Activated CD4-positive, alpha-beta T cell treated with anti-CD3 and anti-CD28 coated beads, Interleukin-2, amount 10 ng/mL, durations not matched to agents 24 days and 14 days (primary cell): ENCODE measurements at regions of chr4 and their contacts with region 1.

Region 1: GRCh38 chr4:1200425-1201035 is 28.1 kb upstream of the SPON2 start:
- DNase-seq: no peak
- H3K4me3 Mint-ChIP-seq: peak overlapping the region; percentile 75
- H3K27ac Mint-ChIP-seq: peak overlapping the region; percentile 99
- H3K4me1 Mint-ChIP-seq: peaks cover 38% of the 10 kb centered on the region
- H3K27me3 Mint-ChIP-seq: no peaks in the 10 kb centered on the region

Region 2: GRCh38 chr4:650951-651883 is 549.3 kb before region 1 on chr4:
- intact Hi-C with region 1: no loop called
- DNase-seq: no peak
- H3K4me3 Mint-ChIP-seq: no peak overlapping the region
- H3K27ac Mint-ChIP-seq: no peak overlapping the region
- H3K4me1 Mint-ChIP-seq: peaks cover 3% of the 10 kb centered on the region
- H3K27me3 Mint-ChIP-seq: no peaks in the 10 kb centered on the region

Region 3: DNA sequence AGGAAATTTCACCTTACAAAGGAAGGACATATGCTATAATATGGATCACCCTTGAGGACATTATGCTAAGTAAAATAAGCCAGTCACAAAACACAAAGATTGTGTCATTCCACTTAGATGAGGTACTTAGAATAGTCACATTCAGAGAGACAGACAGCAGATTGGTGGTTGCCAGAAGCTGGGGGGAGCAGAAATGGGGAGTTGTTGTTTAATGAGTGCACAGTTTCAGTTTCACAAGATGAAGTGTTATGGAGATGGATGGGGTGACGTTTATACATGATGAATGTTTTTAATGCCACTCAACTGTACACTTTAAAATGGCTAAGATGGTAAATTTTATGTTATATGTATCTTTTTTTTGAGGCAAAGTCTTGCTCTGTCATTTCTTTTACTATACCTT is 13.3 kb before region 1 on chr4:
- intact Hi-C with region 1: loop called (anchors 1 kb)
- DNase-seq: peak; percentile 86
- H3K4me3 Mint-ChIP-seq: no peak overlapping the region
- H3K27ac Mint-ChIP-seq: no peak overlapping the region
- H3K4me1 Mint-ChIP-seq: peaks cover 12% of the 10 kb centered on the region
- H3K27me3 Mint-ChIP-seq: no peaks in the 10 kb centered on the region

Region 4: GRCh38 chr4:1218634-1219565 is 18.4 kb after region 1 on chr4:
- intact Hi-C with region 1: loop called (anchors 1 kb)
- DNase-seq: no peak
- H3K4me3 Mint-ChIP-seq: no peak overlapping the region
- H3K27ac Mint-ChIP-seq: peak overlapping the region; percentile 7
- H3K4me1 Mint-ChIP-seq: peaks cover 26% of the 10 kb centered on the region
- H3K27me3 Mint-ChIP-seq: no peaks in the 10 kb centered on the region